SK-MEL-5 (cell line): ENCODE measurements at regions of chr5 and their contacts with region 1.

Region 1: DNA sequence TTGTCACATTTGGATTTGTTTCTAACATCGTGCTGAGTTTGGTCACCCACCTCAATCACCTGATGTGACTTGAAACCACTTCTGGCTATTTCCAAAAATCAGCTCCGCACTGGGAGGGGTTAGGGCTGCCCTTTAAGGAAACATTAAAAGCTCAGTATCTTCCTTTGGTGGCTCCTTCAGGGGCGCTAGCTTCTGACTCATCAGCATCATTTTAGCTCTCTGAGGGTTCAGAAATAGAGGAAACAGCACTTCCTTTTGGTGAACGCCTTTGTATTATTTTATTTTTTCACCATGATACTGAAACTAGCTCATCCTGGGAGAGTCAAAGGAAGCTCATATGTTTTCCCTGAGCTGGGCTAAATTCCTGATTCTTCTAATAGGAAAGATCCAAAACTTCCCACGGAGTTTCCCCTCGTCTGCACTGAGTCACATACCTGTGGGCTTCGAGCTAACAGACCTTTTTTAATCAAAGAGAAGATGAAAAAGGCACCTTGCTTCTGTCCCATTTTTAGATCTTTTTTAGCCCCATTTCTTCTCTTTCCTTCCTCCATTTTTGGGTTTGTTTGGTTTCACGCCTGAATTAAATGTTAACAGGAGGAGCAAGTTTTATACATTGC is 48.2 kb downstream of the ROPN1L start:
- DNase-seq: no peak

Region 2: DNA sequence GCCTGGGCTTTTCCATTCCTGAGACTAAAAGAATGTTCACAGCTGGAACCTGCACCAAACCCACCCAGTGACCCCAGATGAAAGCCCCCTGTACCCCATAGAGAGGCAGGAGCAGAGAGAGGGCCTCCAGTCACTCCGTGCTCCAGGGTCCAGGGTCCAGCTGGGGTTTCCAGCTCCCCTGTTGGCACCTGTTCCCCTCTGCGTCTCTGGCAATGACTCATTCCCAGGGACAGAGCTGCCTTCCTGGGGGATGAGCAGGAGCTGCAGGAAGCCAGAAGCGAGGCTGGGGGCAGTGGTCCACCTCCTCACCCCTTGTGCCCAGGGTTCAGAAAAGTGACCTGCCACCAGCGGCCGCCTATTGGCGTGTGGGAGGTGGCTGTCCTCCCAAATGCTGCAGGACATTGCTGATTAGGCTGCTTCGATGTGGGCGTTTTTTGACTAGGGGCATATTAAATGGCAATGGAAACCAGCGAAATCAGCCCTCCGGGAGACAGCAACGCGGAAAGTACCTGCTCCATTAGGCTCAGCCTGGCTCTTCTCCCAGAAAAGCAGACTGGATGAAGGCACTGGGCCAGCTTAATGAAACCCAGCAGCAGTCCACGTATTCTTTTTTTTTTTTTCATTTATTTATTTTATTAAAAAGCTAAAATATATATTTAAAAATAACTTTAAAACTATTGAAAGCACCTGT is 173.7 kb after region 1 on chr5:
- in situ Hi-C with region 1: loop called (anchors 10 kb)
- DNase-seq: no peak